CD4-positive, alpha-beta T cell (primary cell): ENCODE measurements at regions of chr4 and their contacts with region 1.

Region 1: DNA sequence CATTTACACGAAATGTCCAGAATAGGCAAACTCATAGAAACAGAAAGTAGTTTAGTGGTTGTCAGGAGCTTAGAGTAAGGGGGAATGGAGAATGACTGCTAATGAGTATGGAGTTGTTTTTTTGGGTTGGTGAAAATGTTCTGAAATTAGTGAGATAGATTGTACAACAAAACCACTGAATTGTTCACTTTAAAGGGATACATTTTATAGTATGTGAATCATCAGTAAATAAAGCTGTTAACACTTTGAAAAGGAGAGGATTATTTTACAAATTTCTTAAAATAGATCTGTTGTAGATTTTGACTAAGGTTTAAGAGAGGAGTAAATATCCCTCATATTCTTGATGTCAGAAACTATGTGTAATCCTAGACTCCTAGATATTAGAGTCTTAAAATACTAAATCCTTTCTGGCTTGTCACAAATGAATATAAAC is 82.7 kb downstream of the RAPGEF2 start:
- DNase-seq: no peak
- ATAC-seq: no peak
- H3K4me3 ChIP-seq: no peak overlapping the region
- H3K4me3 Mint-ChIP-seq: no peak overlapping the region
- H3K27ac ChIP-seq: no peak overlapping the region
- H3K27ac Mint-ChIP-seq: no peak overlapping the region
- H3K4me1 ChIP-seq: no peaks in the 10 kb centered on the region
- H3K4me1 Mint-ChIP-seq: peaks cover 7% of the 10 kb centered on the region
- H3K27me3 ChIP-seq: no peaks in the 10 kb centered on the region
- H3K27me3 Mint-ChIP-seq: no peaks in the 10 kb centered on the region
- CTCF ChIP-seq: no peak

Region 2: DNA sequence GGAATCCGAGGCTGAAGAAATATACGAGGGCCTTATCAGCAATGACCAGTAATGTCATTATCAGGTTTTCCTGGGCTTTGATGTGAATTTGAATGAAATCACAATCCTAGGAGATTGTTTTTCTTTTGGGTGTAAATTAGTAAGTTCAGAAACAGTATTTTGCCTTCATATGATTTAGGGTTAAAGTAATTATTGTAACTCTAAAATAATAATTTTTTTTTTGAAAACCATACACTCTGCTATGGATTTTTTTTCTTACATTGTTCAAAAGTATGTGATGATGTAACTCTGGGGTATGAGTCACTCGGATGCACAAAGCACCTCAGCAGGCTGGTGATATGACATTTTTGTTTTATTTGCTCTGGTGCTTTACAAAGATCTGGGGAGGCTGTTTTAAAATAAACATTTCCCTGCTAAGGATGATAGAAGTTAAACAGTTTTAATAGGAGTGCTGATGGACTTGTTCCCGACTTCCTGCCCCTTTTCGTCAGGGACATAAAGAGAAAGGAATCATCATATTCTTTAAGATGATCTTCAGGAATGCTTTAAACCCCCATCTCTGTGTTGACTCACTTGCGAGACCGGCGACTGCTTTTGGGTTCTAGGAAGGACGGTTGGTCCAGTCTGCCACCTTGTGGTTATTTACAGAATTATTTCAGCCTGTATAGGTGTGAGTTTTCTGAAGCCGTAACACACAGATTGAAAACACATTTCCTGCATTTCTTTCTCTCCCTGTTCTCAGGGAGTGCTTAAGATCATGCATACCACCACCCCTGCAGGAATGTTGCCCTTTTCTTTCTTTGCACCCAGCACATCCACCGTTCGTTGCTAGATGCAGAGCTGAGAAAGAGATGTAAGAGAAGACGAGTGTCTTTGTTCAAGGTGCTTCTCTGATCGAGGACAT is 10.3 kb before region 1 on chr4:
- CTCF ChIA-PET with region 1: no interaction called
- POLR2A ChIA-PET with region 1: no interaction called
- intact Hi-C with region 1: loop called in 1 of 2 experiments (anchors 1 kb)
- DNase-seq: peak; percentile 27 to 83 (median 38)
- ATAC-seq: peak; percentile 94
- H3K4me3 ChIP-seq: no peak overlapping the region
- H3K4me3 Mint-ChIP-seq: no peak overlapping the region
- H3K27ac ChIP-seq: no peak overlapping the region
- H3K27ac Mint-ChIP-seq: no peak overlapping the region
- H3K4me1 ChIP-seq: peaks cover 6% of the 10 kb centered on the region
- H3K4me1 Mint-ChIP-seq: peaks cover 49% of the 10 kb centered on the region
- H3K27me3 ChIP-seq: no peaks in the 10 kb centered on the region
- H3K27me3 Mint-ChIP-seq: no peaks in the 10 kb centered on the region
- CTCF ChIP-seq: peak; percentile 87